ENCODE measurements at regions of chr12 and their contacts with region 1.

Region 1: DNA sequence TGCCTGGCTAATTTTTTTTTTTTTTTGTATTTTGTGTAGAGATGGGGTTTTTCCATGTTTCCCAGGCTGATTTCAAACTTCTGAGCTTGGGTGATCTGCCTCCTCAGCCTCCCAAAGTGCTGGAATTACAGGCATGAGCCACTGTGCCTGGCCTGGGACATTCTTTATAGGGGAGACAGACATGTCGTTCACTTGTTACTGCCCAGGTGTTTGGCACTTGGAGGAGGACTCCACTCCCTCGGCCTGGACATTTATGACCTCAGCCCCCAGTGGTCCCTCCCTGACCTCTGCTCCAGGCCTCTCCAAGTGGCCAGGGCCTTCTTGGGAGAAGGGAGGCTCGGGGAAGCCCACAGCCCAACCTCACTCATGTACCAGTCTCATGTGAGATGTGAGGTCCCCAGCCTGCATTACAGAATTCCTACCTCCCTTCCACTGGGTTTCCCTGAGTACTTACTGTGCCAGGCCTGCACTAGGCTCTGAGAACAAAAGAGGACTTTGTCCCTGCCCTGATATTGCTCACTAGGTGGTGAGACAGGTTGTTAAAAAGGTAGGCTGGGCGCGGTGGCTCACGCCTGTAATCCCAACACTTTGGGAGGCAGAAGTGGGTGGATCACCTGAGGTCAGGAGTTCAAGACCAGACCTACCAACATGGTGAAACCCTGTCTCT is 9.7 kb upstream of the POP5 start:
- DNase-seq: no peak
- ATAC-seq: peak; percentile 35; the same call in 1 of the 2 replicates
- H3K4me3 ChIP-seq: no peak overlapping the region
- H3K27ac ChIP-seq: no peak overlapping the region
- H3K4me1 ChIP-seq: no peaks in the 10 kb centered on the region
- H3K27me3 ChIP-seq: no peaks in the 10 kb centered on the region
- CTCF ChIP-seq: no peak

Region 2: GRCh38 chr12:120686690-120687577 is 96.1 kb after region 1 on chr12 and contains the start of gene MLEC:
- CTCF ChIA-PET with region 1: no interaction called
- POLR2A ChIA-PET with region 1: interaction called, 14 read pairs
- intact Hi-C with region 1: no loop called
- DNase-seq: peak; percentile 98
- ATAC-seq: peak; percentile 76
- H3K4me3 ChIP-seq: peak within 1 kb of the TSS; percentile 96
- H3K27ac ChIP-seq: peak within 1 kb of the TSS; percentile 93
- H3K4me1 ChIP-seq: peaks cover 34% of the 10 kb centered on the region
- H3K27me3 ChIP-seq: no peaks in the 10 kb centered on the region
- CTCF ChIP-seq: peak; percentile 18; the same call in 1 of the 2 replicates
- total RNA-seq, gene MLEC: 158 and 166 TPM in 2 replicates

Measured in PC-3 (cell line).